Prostate gland (tissue), 2 donors: ENCODE measurements at regions of chr4 and their contacts with region 1.

Region 1: GRCh38 chr4:115090483-115091075 is 22.8 kb downstream of the NDST4 start:
- DNase-seq: no peak
- H3K4me3 ChIP-seq: no peak overlapping the region
- H3K27ac ChIP-seq: no peak overlapping the region
- H3K4me1 ChIP-seq: no peaks in the 10 kb centered on the region
- H3K27me3 ChIP-seq: no peaks in the 10 kb centered on the region
- CTCF ChIP-seq: peak in 3 of 4 experiments; percentile 42 to 50 (median 46)
- POLR2A ChIP-seq: no peak

Region 2: DNA sequence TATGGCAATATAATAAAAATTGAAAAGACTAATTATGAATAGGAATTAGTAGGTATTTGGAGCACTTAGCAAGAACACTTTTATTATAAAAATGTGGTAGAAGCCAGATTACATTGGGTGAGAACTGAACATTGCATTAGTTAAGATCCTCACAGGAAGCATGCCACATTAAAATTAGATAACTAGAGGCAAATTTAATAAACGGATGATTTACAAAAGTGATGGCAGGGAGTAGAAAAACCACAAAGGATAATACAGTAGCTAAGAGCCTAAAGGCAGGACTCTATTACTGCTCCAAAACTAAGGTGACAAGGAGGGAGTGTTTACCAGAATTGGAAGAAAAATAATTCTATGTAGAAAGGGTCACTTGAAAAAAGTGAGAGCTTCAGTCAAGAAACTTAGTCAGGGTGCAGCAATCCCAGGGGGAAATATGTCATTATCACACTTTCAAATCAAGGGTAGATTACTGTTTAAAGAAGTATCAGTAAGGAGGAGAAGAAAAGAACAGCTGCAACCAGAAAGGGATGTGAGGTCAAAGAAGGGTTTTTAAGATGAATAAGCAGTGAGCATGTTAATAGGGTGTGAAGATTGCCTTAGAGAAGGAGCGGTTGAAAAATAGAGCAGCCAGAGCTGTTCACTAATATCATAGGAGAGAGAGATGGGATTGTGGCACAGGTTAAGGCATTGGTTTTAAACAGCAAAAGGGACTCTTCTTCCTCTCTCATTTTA is 61.7 kb before region 1 on chr4:
- intact Hi-C with region 1: no loop called
- DNase-seq: no peak
- H3K4me3 ChIP-seq: no peak overlapping the region
- H3K27ac ChIP-seq: no peak overlapping the region
- H3K4me1 ChIP-seq: no peaks in the 10 kb centered on the region
- H3K27me3 ChIP-seq: no peaks in the 10 kb centered on the region
- CTCF ChIP-seq: no peak
- POLR2A ChIP-seq: no peak

Region 3: GRCh38 chr4:115537387-115537786 is 446.8 kb after region 1 on chr4:
- intact Hi-C with region 1: loop called (anchors 5 kb)
- DNase-seq: no peak
- H3K4me3 ChIP-seq: no peak overlapping the region
- H3K27ac ChIP-seq: no peak overlapping the region
- H3K4me1 ChIP-seq: no peaks in the 10 kb centered on the region
- H3K27me3 ChIP-seq: no peaks in the 10 kb centered on the region
- CTCF ChIP-seq: no peak
- POLR2A ChIP-seq: no peak